B cell (primary cell): ENCODE measurements at regions of chr16 and their contacts with region 1.

Region 1: DNA sequence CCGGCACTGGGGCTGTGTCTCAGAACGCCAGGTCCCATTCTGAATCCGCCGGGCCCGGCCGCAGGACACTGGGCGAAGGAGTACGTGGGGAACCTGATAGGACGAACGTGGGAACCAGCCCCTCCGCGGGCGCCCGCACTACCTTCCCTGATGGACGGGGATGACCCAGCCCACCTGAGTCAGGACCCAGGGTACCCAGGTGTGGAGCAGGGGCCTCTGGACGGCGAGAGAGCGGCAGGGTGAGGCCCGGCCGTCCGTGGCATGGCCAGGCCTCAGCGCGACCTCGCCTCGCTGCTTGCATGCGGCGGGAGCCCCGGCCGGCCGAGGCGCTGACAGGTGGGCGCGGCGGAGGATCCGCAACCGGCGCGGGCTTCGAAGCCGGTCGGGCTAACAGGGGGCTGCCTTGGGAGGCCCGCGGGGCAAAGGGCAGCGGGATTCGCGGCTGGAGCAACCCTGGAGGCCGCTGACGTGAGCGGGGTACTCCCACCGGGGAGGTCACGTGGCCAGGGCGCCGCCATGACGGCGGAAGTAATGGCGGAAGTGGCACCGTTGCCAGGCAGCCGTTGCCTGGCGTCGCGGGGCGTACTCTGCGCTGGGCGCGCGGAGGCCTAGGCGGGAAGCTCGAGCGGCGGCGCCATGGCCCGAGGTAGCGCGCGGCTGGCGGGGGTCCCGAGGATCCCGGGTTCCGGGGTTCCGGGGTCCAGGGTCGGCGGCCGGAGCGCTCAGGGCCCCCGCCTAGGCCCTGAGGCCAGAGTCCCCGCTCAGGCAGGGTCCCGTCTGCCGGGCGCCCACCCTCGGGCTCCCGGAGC is at the start of gene WDR90:
- DNase-seq: peak; percentile 94
- ATAC-seq: peak; percentile 87
- H3K4me3 ChIP-seq: peak within 1 kb of the TSS; percentile 27 to 76 (median 67)
- H3K4me3 Mint-ChIP-seq: peak within 1 kb of the TSS; percentile 84
- H3K27ac ChIP-seq: peak within 1 kb of the TSS; percentile 79 to 90
- H3K27ac Mint-ChIP-seq: peak within 1 kb of the TSS; percentile 86
- H3K4me1 ChIP-seq: peaks cover 15 to 20% of the 10 kb centered on the region in 2 donors
- H3K4me1 Mint-ChIP-seq: peaks cover 19% of the 10 kb centered on the region
- H3K27me3 ChIP-seq: no peaks in the 10 kb centered on the region
- H3K27me3 Mint-ChIP-seq: no peaks in the 10 kb centered on the region
- CTCF ChIP-seq: no peak
- total RNA-seq, gene WDR90: 34.7 and 45.0 TPM in 2 replicates

Region 2: DNA sequence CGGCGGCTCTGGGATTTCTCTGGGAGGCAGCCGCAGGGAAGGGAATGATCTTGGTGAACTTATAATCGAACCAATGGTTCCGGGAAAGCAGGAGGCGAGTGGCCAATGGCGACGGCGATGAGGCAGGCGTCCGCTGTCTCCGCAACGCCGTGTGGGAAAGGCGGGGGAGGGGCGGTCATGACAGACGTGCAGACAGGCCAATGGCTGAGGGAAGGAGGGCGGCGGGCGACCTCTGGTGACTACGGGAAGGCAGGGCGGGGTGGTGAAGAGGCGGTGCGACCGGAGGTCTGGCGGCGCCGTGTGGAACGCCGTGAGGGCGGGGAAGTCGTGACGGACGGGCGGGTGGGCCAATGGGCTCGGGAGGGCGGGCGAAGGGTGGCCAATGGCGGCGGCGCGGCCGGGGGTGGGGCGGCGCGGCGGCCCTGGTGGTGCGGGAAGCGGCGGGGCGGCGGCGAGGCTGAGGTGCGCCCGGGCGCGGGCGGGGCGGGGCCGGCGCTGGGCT is 59.3 kb before region 1 on chr16 and contains the start of gene RAB40C:
- CTCF ChIA-PET with region 1: no interaction called
- POLR2A ChIA-PET with region 1: interaction called, 3 read pairs
- intact Hi-C with region 1: loop called (anchors 2 kb)
- DNase-seq: peak; percentile 100
- ATAC-seq: peak; percentile 84
- H3K4me3 ChIP-seq: peak within 1 kb of the TSS; percentile 66 to 89 (median 78)
- H3K4me3 Mint-ChIP-seq: peak within 1 kb of the TSS; percentile 94
- H3K27ac ChIP-seq: peak within 1 kb of the TSS; percentile 85 to 88
- H3K27ac Mint-ChIP-seq: peak within 1 kb of the TSS; percentile 99
- H3K4me1 ChIP-seq: peaks cover 14 to 30% of the 10 kb centered on the region in 2 donors
- H3K4me1 Mint-ChIP-seq: peaks cover 50% of the 10 kb centered on the region
- H3K27me3 ChIP-seq: peaks cover 0 to 2% (median 0%) of the 10 kb centered on the region in 4 experiments
- H3K27me3 Mint-ChIP-seq: no peaks in the 10 kb centered on the region
- CTCF ChIP-seq: no peak
- total RNA-seq, gene RAB40C: 25.5 and 26.9 TPM in 2 replicates

Region 3: GRCh38 chr16:621528-622105 is 27.4 kb before region 1 on chr16:
- CTCF ChIA-PET with region 1: no interaction called
- POLR2A ChIA-PET with region 1: no interaction called
- intact Hi-C with region 1: no loop called
- DNase-seq: no peak
- ATAC-seq: no peak
- H3K4me3 ChIP-seq: no peak overlapping the region
- H3K4me3 Mint-ChIP-seq: no peak overlapping the region
- H3K27ac ChIP-seq: no peak overlapping the region
- H3K27ac Mint-ChIP-seq: no peak overlapping the region
- H3K4me1 ChIP-seq: no peaks in the 10 kb centered on the region
- H3K4me1 Mint-ChIP-seq: no peaks in the 10 kb centered on the region
- H3K27me3 ChIP-seq: no peaks in the 10 kb centered on the region
- H3K27me3 Mint-ChIP-seq: no peaks in the 10 kb centered on the region
- CTCF ChIP-seq: no peak

Region 4: DNA sequence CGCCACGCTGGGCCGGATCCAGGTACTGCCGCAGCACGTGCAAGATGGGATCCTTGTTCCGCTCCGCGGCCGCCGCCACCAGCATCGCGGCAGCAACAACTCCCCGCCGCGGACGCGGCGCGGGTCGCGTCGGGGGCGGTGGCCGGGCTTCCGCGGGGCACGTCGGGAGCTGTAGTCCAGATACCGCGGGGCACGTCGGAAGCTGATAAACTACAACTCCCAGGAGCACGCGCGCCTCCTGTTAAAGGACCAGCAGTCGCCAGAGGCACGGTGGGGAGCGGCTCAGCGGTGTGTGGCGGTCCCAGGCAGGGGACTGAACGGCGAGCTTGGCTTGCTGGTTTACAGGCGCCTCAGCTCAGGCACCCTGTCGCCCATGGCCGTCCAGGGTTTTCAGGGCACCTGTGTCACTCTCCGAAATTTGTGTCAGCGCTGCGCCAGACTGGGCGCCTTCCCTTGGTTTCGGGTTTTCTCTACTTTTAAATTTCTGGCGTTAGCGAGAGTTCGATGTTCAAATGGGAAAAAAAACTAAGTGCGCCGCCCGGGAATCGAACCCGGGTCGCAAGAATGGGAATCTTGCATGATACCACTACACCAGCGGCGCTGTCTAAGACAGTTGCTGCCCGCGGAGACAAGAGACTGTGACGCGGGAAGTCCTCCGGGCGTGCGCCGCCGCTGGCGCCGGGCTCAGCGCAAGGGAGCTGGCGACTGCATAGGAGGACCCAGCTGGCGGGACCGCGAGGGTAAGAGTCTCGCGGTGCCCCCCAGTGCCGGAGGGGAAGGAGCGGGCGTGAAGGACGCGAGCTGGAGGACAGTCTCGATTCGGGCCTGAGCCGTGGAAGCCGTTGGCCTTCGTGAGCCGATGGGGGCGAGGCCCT is 12.5 kb before region 1 on chr16 and contains the start of gene METTL26:
- CTCF ChIA-PET with region 1: interaction called, 6 read pairs
- POLR2A ChIA-PET with region 1: interaction called, 4 read pairs
- intact Hi-C with region 1: loop called (anchors 1 kb)
- DNase-seq: peak; percentile 96
- ATAC-seq: peak; percentile 81
- H3K4me3 ChIP-seq: peak within 1 kb of the TSS; percentile 84 to 95 (median 87)
- H3K4me3 Mint-ChIP-seq: peak within 1 kb of the TSS; percentile 98
- H3K27ac ChIP-seq: peak within 1 kb of the TSS; percentile 82 to 83
- H3K27ac Mint-ChIP-seq: peak within 1 kb of the TSS; percentile 98
- H3K4me1 ChIP-seq: peaks cover 14 to 43% of the 10 kb centered on the region in 2 donors
- H3K4me1 Mint-ChIP-seq: peaks cover 23% of the 10 kb centered on the region
- H3K27me3 ChIP-seq: no peaks in the 10 kb centered on the region
- H3K27me3 Mint-ChIP-seq: no peaks in the 10 kb centered on the region
- CTCF ChIP-seq: no peak
- total RNA-seq, gene METTL26: 47.2 and 56.6 TPM in 2 replicates

Region 5: DNA sequence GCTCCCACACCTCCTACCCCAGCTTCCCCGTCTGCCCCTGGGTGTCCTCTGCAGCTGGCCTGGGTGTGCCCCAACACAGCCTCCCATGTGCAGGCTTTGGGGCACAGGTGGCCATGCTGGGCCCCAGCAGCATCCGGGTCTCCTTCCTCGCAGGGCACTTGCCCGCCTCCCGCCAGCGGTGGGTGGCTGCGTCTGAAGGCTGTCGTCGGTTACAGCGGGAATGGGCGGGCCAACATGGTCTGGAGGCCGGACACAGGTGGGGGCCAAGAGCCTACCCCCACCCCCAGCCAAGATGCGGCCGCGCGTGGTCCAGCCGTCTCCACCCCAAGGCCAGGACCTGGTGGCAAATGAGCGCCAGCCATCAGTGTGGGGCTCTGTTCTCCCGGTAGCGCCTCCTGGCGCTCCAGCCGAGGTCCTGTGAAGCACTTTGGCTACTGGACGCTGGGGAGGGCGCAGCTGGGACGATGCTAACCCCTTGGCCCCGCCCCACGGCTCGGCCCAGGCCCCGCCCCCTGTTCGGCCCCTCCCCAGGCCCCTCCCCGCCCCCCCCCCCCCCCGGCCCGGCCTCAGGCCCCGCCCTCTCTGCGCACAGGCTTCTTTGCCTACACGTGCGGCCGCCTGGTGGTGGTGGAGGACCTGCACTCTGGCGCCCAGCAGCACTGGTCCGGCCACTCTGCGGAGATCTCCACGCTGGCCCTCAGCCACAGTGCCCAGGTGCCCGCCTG is 11.6 kb after region 1 on chr16:
- CTCF ChIA-PET with region 1: no interaction called
- POLR2A ChIA-PET with region 1: interaction called, 6 read pairs
- intact Hi-C with region 1: loop called (anchors 1 kb)
- DNase-seq: peak; percentile 81
- ATAC-seq: peak; percentile 90
- H3K4me3 ChIP-seq: peak overlapping the region in 4 of 5 experiments; percentile 9 to 35 (median 24)
- H3K4me3 Mint-ChIP-seq: peak overlapping the region; percentile 52
- H3K27ac ChIP-seq: peak overlapping the region in 1 of 2 donors; percentile 43
- H3K27ac Mint-ChIP-seq: peak overlapping the region; percentile 56
- H3K4me1 ChIP-seq: peaks cover 10 to 17% of the 10 kb centered on the region in 2 donors
- H3K4me1 Mint-ChIP-seq: peaks cover 10% of the 10 kb centered on the region
- H3K27me3 ChIP-seq: no peaks in the 10 kb centered on the region
- H3K27me3 Mint-ChIP-seq: no peaks in the 10 kb centered on the region
- CTCF ChIP-seq: peak; percentile 57

Region 6: GRCh38 chr16:667780-668518 is 19.0 kb after region 1 on chr16 and contains the start of gene RHOT2:
- CTCF ChIA-PET with region 1: no interaction called
- POLR2A ChIA-PET with region 1: no interaction called
- intact Hi-C with region 1: loop called (anchors 2 kb)
- DNase-seq: peak; percentile 95
- ATAC-seq: peak; percentile 99
- H3K4me3 ChIP-seq: peak within 1 kb of the TSS; percentile 23 to 84 (median 73)
- H3K4me3 Mint-ChIP-seq: peak within 1 kb of the TSS; percentile 86
- H3K27ac ChIP-seq: peak within 1 kb of the TSS; percentile 41 to 79
- H3K27ac Mint-ChIP-seq: peak within 1 kb of the TSS; percentile 92
- H3K4me1 ChIP-seq: peaks cover 15 to 25% of the 10 kb centered on the region in 2 donors
- H3K4me1 Mint-ChIP-seq: peaks cover 12% of the 10 kb centered on the region
- H3K27me3 ChIP-seq: no peaks in the 10 kb centered on the region
- H3K27me3 Mint-ChIP-seq: no peaks in the 10 kb centered on the region
- CTCF ChIP-seq: peak; percentile 79
- total RNA-seq, gene RHOT2: 207 and 215 TPM in 2 replicates

Region 7: GRCh38 chr16:813204-813915 is 164.4 kb after region 1 on chr16:
- CTCF ChIA-PET with region 1: no interaction called
- POLR2A ChIA-PET with region 1: no interaction called
- intact Hi-C with region 1: no loop called
- DNase-seq: peak; percentile 54
- ATAC-seq: peak; percentile 87
- H3K4me3 ChIP-seq: no peak overlapping the region
- H3K4me3 Mint-ChIP-seq: peak overlapping the region; percentile 24
- H3K27ac ChIP-seq: no peak overlapping the region
- H3K27ac Mint-ChIP-seq: no peak overlapping the region
- H3K4me1 ChIP-seq: peaks cover 9 to 11% of the 10 kb centered on the region in 2 donors
- H3K4me1 Mint-ChIP-seq: peaks cover 5% of the 10 kb centered on the region
- H3K27me3 ChIP-seq: peaks cover 0 to 49% (median 7%) of the 10 kb centered on the region in 4 experiments
- H3K27me3 Mint-ChIP-seq: peaks cover 32% of the 10 kb centered on the region
- CTCF ChIP-seq: peak; percentile 51